Heart right ventricle (tissue), 16 donors: ENCODE measurements at regions of chr11 and their contacts with region 1.

Region 1: DNA sequence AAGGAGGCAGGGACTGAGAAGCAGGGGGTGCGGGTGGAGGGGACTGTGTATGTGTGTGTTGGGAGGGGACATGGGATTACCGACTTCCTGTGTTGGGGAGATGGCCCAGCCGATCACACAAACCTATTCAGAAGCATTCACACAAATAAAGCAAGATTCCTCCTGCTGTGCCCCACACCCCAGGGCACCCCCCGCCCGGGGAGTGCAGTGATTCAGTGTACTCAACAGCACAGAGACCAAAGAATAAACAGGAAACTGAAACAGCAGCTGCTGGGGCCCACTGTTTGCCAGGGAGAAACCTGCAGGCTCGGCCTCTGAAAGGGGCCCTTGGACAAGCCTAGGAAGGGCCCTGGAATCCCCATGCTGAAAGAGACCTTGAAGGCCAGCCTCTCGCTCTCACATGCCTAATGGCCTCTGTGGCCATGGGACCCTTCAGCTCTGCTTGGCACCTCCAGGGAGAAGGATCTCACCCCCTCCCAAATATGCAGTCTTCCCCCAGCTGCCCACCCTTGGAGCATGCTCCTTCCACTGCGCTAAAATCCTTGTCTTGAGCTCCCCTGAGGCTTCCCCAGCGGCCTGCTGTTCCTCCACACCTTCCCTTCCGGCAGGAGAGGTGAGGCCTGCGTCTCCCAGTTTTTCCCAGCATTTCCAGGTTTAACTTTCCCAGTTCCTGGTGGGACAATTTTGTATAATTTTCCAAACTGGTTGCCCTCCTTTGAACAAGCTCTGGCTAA is 72.9 kb downstream of the CSNK2A3 start:
- DNase-seq: no peak
- ATAC-seq: peak in 7 of 8 donors; percentile 29 to 72 (median 56)
- H3K4me3 ChIP-seq: no peak overlapping the region
- H3K27ac ChIP-seq: peak overlapping the region in 5 of 10 donors; percentile 9 to 67 (median 42)
- H3K4me1 ChIP-seq: peaks cover 0 to 33% (median 13%) of the 10 kb centered on the region in 9 donors
- H3K27me3 ChIP-seq: no peaks in the 10 kb centered on the region
- CTCF ChIP-seq: no peak

Region 2: DNA sequence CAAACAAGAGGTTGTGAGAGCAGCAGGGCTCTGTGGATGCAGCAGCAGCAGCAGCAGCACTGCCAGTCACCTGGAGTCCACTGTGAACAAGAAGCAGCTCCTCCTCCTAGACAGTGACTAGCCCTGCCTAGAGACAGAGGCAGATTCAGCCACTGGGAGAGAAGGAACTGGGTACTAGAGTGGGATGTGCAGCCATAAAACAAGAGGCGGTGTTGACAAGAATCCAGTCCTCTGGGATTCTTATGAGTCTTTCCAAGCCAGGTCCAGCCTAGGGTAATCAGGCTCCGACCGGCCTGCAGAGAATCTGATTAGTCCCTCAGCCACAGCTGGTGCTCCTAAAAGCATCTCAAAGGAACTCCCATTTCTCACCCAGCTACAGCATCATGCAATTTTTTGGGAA is 477.8 kb after region 1 on chr11:
- intact Hi-C with region 1: loop called in 1 of 10 experiments (anchors 10 kb)
- DNase-seq: no peak
- ATAC-seq: no peak
- H3K4me3 ChIP-seq: no peak overlapping the region
- H3K27ac ChIP-seq: no peak overlapping the region
- H3K4me1 ChIP-seq: peaks cover 0 to 3% (median 0%) of the 10 kb centered on the region in 9 donors
- H3K27me3 ChIP-seq: peaks cover 0 to 11% (median 4%) of the 10 kb centered on the region in 7 donors
- CTCF ChIP-seq: no peak